PC-9 (cell line): ENCODE measurements at regions of chr17 and their contacts with region 1.

Region 1: GRCh38 chr17:53655591-53655990 is 167.1 kb upstream of the KIF2B start:
- DNase-seq: no peak
- H3K4me3 ChIP-seq: no peak overlapping the region
- H3K27ac ChIP-seq: no peak overlapping the region
- H3K4me1 ChIP-seq: no peaks in the 10 kb centered on the region
- H3K27me3 ChIP-seq: no peaks in the 10 kb centered on the region
- CTCF ChIP-seq: no peak

Region 2: GRCh38 chr17:53353919-53354351 is 301.7 kb before region 1 on chr17:
- CTCF ChIA-PET with region 1: no interaction called
- POLR2A ChIA-PET with region 1: no interaction called
- intact Hi-C with region 1: no loop called
- DNase-seq: no peak
- H3K4me3 ChIP-seq: no peak overlapping the region
- H3K27ac ChIP-seq: no peak overlapping the region
- H3K4me1 ChIP-seq: no peaks in the 10 kb centered on the region
- H3K27me3 ChIP-seq: no peaks in the 10 kb centered on the region
- CTCF ChIP-seq: no peak

Region 3: DNA sequence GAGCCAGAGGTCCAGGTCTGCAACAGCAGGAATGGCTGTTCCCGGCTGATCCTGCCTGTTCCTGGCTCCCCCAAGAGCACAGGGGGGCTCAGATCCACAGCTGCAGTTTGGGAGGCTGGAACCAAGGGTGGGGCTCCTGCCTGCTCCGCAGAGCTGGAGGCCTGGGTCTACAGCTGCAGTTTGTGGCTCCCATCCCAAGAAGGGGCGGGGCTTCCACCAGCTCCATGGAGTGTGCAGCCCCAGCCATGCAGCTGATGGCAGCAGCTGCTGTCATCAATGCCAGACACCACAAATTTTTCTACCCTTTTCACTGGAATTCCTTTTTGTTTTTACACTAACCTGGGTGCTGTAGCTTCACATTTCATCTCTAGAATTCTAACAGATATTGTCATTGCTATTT is 31.7 kb after region 1 on chr17:
- CTCF ChIA-PET with region 1: no interaction called
- POLR2A ChIA-PET with region 1: interaction called, 10 read pairs
- intact Hi-C with region 1: no loop called
- DNase-seq: no peak
- H3K4me3 ChIP-seq: no peak overlapping the region
- H3K27ac ChIP-seq: no peak overlapping the region
- H3K4me1 ChIP-seq: no peaks in the 10 kb centered on the region
- H3K27me3 ChIP-seq: no peaks in the 10 kb centered on the region
- CTCF ChIP-seq: no peak